ENCODE measurements at regions of chr10 and their contacts with region 1.

Region 1: GRCh38 chr10:90592638-90593302 is 265.1 kb downstream of the HTR7 start:
- DNase-seq: peak; percentile 63
- ATAC-seq: peak; percentile 91
- H3K4me3 ChIP-seq: no peak overlapping the region
- H3K27ac ChIP-seq: no peak overlapping the region
- H3K4me1 ChIP-seq: peaks cover 1% of the 10 kb centered on the region
- H3K27me3 ChIP-seq: no peaks in the 10 kb centered on the region
- CTCF ChIP-seq: peak; percentile 72

Region 2: GRCh38 chr10:89954787-89955566 is 637.8 kb before region 1 on chr10:
- CTCF ChIA-PET with region 1: no interaction called
- POLR2A ChIA-PET with region 1: no interaction called
- intact Hi-C with region 1: loop called (anchors 2 kb)
- DNase-seq: peak; percentile 45
- ATAC-seq: no peak
- H3K4me3 ChIP-seq: no peak overlapping the region
- H3K27ac ChIP-seq: no peak overlapping the region
- H3K4me1 ChIP-seq: no peaks in the 10 kb centered on the region
- H3K27me3 ChIP-seq: no peaks in the 10 kb centered on the region
- CTCF ChIP-seq: peak; percentile 60

Region 3: GRCh38 chr10:90148116-90148855 is 444.5 kb before region 1 on chr10:
- CTCF ChIA-PET with region 1: interaction called, 3 read pairs
- POLR2A ChIA-PET with region 1: no interaction called
- intact Hi-C with region 1: loop called (anchors 2 kb)
- DNase-seq: peak; percentile 69
- ATAC-seq: peak; percentile 57
- H3K4me3 ChIP-seq: peak overlapping the region; percentile 17; the same call in 1 of the 2 replicates
- H3K27ac ChIP-seq: peak overlapping the region; percentile 57
- H3K4me1 ChIP-seq: peaks cover 30% of the 10 kb centered on the region
- H3K27me3 ChIP-seq: no peaks in the 10 kb centered on the region
- CTCF ChIP-seq: peak; percentile 70

Region 4: DNA sequence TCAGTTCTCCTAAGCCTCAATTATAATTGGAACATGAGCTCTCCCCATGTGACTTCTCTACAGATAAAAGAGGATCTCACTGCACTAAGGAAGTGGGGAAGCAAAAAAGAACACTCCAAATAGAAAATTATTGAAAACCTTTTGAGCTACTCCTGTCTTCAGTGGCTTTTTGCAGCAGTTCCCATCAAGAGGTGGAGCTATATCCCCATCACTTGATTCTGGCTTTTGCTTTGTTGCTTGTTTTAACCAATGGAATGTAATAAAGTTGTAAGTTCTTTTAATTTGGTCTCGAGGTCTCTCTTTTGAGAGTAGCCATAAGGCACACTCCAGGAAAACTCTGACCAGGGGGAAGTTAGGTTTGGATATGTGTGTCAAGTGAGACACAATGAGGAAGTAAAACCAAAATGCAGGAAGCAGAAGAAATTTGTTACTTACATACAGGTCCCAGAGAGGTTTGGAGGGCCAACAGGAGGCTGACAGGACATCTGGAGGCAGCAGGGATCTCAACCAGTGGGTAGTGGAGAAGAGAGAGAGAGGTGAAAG is 304.3 kb before region 1 on chr10:
- CTCF ChIA-PET with region 1: interaction called, 8 read pairs
- POLR2A ChIA-PET with region 1: no interaction called
- intact Hi-C with region 1: loop called (anchors 1 kb)
- DNase-seq: peak; percentile 53
- ATAC-seq: peak; percentile 66
- H3K4me3 ChIP-seq: no peak overlapping the region
- H3K27ac ChIP-seq: peak overlapping the region; percentile 42
- H3K4me1 ChIP-seq: peaks cover 19% of the 10 kb centered on the region
- H3K27me3 ChIP-seq: no peaks in the 10 kb centered on the region
- CTCF ChIP-seq: peak; percentile 63

Region 5: DNA sequence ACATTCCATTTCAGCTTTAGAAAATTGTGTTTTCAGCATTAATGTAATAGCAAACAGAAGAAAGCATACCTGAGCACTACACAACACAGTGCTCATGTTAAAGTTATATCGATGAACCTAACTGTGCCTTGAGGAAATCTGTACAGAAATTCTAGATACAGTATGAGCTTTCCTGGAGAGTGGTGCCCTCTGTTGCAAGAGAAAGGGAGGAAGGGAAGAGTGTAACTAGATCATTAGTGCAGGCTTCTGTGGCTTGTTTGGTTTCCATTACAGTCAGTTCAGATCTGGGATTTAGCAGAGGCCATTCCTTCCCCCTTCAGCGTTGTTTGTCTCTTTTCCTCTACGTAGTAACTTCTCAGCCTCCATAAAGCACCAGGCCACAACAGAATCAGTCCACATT is 125.4 kb after region 1 on chr10:
- CTCF ChIA-PET with region 1: no interaction called
- POLR2A ChIA-PET with region 1: no interaction called
- intact Hi-C with region 1: loop called (anchors 10 kb)
- DNase-seq: peak; percentile 25
- ATAC-seq: peak; percentile 67
- H3K4me3 ChIP-seq: no peak overlapping the region
- H3K27ac ChIP-seq: no peak overlapping the region
- H3K4me1 ChIP-seq: no peaks in the 10 kb centered on the region
- H3K27me3 ChIP-seq: no peaks in the 10 kb centered on the region
- CTCF ChIP-seq: peak; percentile 42; the same call in 1 of the 2 replicates

Measured in PC-3 (cell line).